ENCODE measurements at regions of chr11 and their contacts with region 1.

Region 1: DNA sequence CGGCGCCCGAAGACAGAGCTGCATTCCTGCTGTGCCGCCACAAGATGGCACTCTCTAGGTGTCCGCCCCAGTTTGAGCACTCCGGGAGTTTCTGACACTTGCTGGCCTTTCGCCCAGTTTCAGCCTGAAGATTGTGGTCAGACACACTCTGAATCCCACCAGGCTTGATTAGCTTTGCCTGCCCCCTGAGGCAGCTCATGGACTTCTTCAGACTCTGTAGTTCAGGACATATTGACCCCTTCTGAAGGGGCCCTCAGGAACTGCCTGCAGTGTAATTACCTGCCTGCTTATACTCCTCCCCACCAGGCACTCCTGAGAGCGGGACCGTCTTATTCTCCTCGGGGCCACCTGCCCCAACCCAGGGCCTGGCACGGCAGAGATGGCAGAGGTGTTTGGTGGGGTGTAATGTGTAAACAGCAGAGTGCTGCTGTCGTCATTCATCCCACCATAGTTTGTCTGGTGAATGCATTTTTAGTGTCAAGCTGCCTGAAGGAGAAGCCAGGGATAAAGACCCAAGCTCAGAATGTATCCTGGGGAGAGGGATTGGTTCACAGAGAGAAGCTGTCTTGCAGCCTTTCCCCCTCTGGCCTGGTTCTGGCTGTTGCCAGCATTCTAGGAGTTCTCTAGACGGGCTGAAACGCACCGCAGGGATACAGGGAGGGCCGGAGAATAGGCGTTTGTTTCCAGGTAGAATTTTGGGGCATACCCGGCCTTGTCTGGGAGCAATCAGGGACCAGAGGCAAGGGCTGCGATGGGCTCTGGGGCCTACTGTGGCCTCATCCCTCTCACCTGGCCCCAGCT is 46.4 kb downstream of the EIF3F start:
- DNase-seq: peak; percentile 61
- ATAC-seq: peak; percentile 93
- H3K4me3 Mint-ChIP-seq: no peak overlapping the region
- H3K27ac Mint-ChIP-seq: no peak overlapping the region
- H3K4me1 Mint-ChIP-seq: peaks cover 2% of the 10 kb centered on the region
- H3K27me3 Mint-ChIP-seq: peaks cover 15% of the 10 kb centered on the region
- CTCF ChIP-seq: peak; percentile 80

Region 2: DNA sequence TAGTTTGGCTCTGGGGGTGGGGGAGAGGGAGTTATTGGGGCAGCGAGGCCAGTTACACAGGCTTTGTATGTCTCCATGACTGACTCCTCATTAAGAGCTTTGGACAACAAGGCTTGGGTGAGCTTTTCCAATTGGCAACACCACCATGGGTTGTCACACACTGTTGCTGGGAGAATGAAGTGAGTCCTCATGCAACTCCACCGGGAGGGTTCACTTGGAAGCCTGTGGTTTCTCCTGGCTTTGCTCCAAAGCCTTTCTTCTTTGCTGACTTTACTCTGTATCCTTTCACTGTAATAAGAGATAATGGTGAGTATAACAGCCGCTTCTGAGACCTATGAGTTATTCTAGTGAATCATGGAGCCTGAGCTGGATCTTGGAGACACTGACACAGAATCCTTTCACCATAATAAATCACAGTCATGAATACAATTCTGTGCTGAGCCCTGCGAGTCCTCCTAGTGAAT is 21.5 kb before region 1 on chr11:
- CTCF ChIA-PET with region 1: interaction called, 35 read pairs
- POLR2A ChIA-PET with region 1: no interaction called
- intact Hi-C with region 1: no loop called
- DNase-seq: no peak
- ATAC-seq: no peak
- H3K4me3 Mint-ChIP-seq: no peak overlapping the region
- H3K27ac Mint-ChIP-seq: no peak overlapping the region
- H3K4me1 Mint-ChIP-seq: no peaks in the 10 kb centered on the region
- H3K27me3 Mint-ChIP-seq: peaks cover 20% of the 10 kb centered on the region
- CTCF ChIP-seq: no peak

Region 3: GRCh38 chr11:8018484-8019313 is 14.8 kb before region 1 on chr11:
- CTCF ChIA-PET with region 1: interaction called, 35 read pairs
- POLR2A ChIA-PET with region 1: no interaction called
- intact Hi-C with region 1: no loop called
- DNase-seq: peak; percentile 76
- ATAC-seq: peak; percentile 78
- H3K4me3 Mint-ChIP-seq: peak overlapping the region; percentile 61
- H3K27ac Mint-ChIP-seq: peak overlapping the region; percentile 20
- H3K4me1 Mint-ChIP-seq: peaks cover 11% of the 10 kb centered on the region
- H3K27me3 Mint-ChIP-seq: peaks cover 32% of the 10 kb centered on the region
- CTCF ChIP-seq: no peak

Region 4: GRCh38 chr11:8043756-8044155 is 10.3 kb after region 1 on chr11:
- CTCF ChIA-PET with region 1: interaction called, 10 read pairs
- POLR2A ChIA-PET with region 1: no interaction called
- intact Hi-C with region 1: no loop called
- DNase-seq: no peak
- ATAC-seq: no peak
- H3K4me3 Mint-ChIP-seq: no peak overlapping the region
- H3K27ac Mint-ChIP-seq: no peak overlapping the region
- H3K4me1 Mint-ChIP-seq: no peaks in the 10 kb centered on the region
- H3K27me3 Mint-ChIP-seq: peaks cover 14% of the 10 kb centered on the region
- CTCF ChIP-seq: no peak

Region 5: DNA sequence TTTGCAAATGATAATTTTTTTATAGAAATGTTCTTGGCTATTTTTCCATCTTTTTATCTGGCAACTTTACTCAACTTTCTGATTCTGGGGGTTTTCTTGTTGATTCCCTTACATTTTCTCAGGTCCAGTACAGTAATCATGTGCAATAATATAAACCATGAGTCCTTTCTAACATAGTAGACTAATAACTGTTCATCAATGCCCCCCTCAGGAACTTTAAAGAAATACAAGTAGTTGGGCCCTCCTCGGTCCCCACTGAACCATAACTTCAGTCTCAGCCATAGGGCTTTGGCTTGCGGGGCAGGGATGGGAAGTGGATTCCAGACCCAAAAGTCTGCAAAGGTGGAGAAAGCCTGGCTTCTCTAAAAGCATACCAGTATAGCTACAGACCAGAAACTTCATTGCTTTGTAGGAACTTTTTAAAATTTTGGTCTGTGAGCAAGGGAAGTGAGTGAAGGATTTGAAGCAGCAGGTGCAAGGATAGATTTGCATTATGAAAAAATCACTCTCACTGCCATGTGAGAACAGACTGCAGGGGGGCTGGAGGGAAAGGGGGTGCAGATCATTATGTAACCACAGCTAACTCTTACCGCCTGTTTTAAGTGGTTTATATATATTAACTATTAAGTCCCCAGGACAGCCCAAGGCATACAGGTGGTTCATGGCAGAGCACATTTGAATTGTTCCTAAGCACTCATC is 37.1 kb after region 1 on chr11:
- CTCF ChIA-PET with region 1: interaction called, 6 read pairs
- POLR2A ChIA-PET with region 1: no interaction called
- intact Hi-C with region 1: loop called (anchors 2 kb)
- DNase-seq: no peak
- ATAC-seq: peak; percentile 66
- H3K4me3 Mint-ChIP-seq: no peak overlapping the region
- H3K27ac Mint-ChIP-seq: no peak overlapping the region
- H3K4me1 Mint-ChIP-seq: no peaks in the 10 kb centered on the region
- H3K27me3 Mint-ChIP-seq: peaks cover 8% of the 10 kb centered on the region
- CTCF ChIP-seq: peak; percentile 56

Region 6: DNA sequence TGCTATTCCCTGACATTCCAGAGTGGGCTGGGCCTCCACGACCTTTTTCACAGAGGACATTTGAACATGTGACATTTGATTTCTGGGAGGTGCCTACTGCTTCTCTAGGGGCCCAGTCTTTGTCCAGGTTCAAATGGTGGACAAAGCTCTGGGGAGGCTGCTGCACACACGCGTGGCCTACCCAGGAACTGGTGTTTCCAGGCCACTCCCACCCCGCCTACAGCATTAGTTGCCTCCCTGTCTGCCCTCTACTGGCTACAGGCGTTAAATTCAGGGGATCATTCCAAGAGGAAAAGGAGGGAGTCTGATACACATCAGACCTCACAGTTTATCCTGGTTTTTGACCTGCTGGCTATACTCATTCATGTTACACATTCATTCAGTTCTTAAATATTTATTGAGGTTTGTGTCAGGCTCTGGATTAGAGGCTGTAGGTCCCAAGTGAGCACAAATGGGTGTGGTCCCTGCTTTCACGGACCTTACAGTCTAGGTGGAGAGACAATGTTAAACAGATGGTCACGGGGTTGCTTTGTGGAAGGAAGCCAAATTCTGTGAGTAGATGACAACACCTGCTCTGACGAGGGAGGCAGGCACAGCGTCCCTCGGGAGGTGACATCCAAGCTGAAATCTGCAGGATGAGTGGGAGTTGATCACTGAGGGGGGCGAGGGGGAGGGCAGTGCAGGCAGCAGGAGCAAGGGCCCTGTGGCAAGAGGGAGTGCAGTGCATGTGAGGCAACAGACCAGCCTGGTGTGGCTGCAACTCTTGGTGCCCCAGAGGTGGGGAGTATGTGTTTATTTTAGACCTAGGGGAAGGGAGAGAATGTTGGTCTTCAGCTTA is 59.3 kb after region 1 on chr11:
- CTCF ChIA-PET with region 1: interaction called, 120 read pairs
- POLR2A ChIA-PET with region 1: no interaction called
- intact Hi-C with region 1: loop called (anchors 5 kb)
- DNase-seq: peak; percentile 68
- ATAC-seq: peak; percentile 88
- H3K4me3 Mint-ChIP-seq: no peak overlapping the region
- H3K27ac Mint-ChIP-seq: no peak overlapping the region
- H3K4me1 Mint-ChIP-seq: no peaks in the 10 kb centered on the region
- H3K27me3 Mint-ChIP-seq: no peaks in the 10 kb centered on the region
- CTCF ChIP-seq: peak; percentile 52